SK-N-SH (cell line): ENCODE measurements at regions of chr2 and their contacts with region 1.

Region 1: GRCh38 chr2:47339745-47340541 is 63.0 kb upstream of the MSH2 start:
- DNase-seq: no peak
- H3K4me3 ChIP-seq: no peak overlapping the region
- H3K27ac ChIP-seq: no peak overlapping the region; a peak in 1 of 4 replicates
- H3K4me1 ChIP-seq: peaks cover 0 to 18% of the 10 kb centered on the region in 2 experiments; a peak in 2 of 4 replicates
- H3K27me3 ChIP-seq: no peaks in the 10 kb centered on the region
- CTCF ChIP-seq: no peak
- EP300 ChIP-seq: no peak
- RAD21 ChIP-seq: no peak

Region 2: GRCh38 chr2:47373747-47374146 is 33.8 kb after region 1 on chr2:
- CTCF ChIA-PET with region 1: interaction called, 39 read pairs
- POLR2A ChIA-PET with region 1: interaction called, 4 read pairs
- DNase-seq: peak; percentile 71
- H3K4me3 ChIP-seq: no peak overlapping the region
- H3K27ac ChIP-seq: no peak overlapping the region
- H3K4me1 ChIP-seq: peaks cover 0 to 4% of the 10 kb centered on the region in 2 experiments; a peak in 1 of 4 replicates
- H3K27me3 ChIP-seq: peaks cover 1% of the 10 kb centered on the region; the same call in 1 of the 2 replicates
- CTCF ChIP-seq: peak; percentile 49
- EP300 ChIP-seq: no peak
- RAD21 ChIP-seq: peak; percentile 77

Region 3: DNA sequence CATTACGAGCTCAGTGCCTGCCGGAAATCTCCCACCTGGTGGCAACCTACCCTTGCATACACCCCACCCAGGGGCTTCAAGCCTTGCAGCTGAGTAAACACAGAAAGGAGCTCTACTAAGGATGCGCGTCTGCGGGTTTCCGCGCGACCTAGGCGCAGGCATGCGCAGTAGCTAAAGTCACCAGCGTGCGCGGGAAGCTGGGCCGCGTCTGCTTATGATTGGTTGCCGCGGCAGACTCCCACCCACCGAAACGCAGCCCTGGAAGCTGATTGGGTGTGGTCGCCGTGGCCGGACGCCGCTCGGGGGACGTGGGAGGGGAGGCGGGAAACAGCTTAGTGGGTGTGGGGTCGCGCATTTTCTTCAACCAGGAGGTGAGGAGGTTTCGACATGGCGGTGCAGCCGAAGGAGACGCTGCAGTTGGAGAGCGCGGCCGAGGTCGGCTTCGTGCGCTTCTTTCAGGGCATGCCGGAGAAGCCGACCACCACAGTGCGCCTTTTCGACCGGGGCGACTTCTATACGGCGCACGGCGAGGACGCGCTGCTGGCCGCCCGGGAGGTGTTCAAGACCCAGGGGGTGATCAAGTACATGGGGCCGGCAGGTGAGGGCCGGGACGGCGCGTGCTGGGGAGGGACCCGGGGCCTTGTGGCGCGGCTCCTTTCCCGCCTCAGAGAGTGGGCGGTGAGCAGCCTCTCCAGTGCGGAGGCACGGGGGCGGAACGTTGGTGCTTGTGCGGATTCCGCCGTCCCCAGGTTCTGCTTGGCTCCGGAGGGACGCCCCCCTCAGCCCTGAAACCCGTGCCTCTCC is 63.1 kb after region 1 on chr2 and contains the start of gene MSH2:
- CTCF ChIA-PET with region 1: interaction called, 11 read pairs
- POLR2A ChIA-PET with region 1: interaction called, 9 read pairs
- DNase-seq: peak; percentile 100
- H3K4me3 ChIP-seq: peak within 1 kb of the TSS; percentile 74 to 96
- H3K27ac ChIP-seq: peak within 1 kb of the TSS; percentile 50 to 74
- H3K4me1 ChIP-seq: peaks cover 6 to 11% of the 10 kb centered on the region in 2 experiments; a peak in 1 of 4 replicates
- H3K27me3 ChIP-seq: no peaks in the 10 kb centered on the region
- CTCF ChIP-seq: 0 out of 2 replicates have a peak, but pooled peaks have one; percentile 8
- EP300 ChIP-seq: no peak; a peak in 1 of 4 replicates
- RAD21 ChIP-seq: no peak; the same call in 1 of the 2 replicates
- polyA plus RNA-seq, gene MSH2: 13.7 and 16.4 TPM in 2 replicates